ENCODE measurements at regions of chr11 and their contacts with region 1.

Region 1: GRCh38 chr11:62841361-62842184 is 2.2 kb upstream of the WDR74 start:
- DNase-seq: peak; percentile 87
- H3K4me3 Mint-ChIP-seq: no peak overlapping the region
- H3K27ac Mint-ChIP-seq: no peak overlapping the region
- H3K4me1 Mint-ChIP-seq: peaks cover 27% of the 10 kb centered on the region
- H3K27me3 Mint-ChIP-seq: no peaks in the 10 kb centered on the region

Region 2: DNA sequence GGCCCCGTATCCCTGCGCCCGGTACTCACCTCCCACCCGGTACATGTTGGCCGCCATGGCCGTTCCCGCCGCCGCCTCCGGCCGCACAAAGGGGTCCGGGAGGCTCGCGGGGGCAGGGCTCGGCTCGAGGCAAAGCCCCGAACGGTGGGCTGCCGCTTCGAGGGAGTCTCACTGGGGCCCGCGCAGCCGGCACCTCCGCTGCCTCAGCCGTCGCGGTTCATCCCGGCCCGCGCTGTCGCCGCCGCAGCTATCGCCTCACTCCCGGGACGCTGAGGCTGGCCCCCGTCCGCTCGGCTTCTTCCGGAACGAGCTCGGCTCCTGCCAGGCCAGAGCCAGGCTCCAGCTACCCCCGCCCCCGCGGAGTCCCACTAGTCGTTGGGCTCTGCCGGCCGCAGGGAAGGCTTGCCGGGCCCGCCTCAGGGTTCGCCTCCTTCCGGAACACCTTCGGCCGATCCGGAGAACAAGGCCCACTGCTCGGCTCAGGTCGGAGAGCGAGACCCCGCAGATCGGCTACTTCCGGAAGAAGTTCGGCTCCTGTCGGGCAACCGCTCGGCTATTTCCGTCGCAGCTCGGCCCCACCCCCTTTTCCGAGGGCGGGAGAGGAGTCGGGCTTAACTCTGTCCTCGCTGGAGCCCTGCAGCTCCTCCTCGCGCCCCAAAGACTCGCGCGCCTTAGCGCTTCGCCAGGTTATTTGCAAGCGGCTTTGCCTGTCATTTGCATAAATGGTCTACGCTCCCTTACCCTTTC is 240.0 kb before region 1 on chr11 and contains the start of gene MTA2:
- CTCF ChIA-PET with region 1: no interaction called
- POLR2A ChIA-PET with region 1: interaction called, 38 read pairs
- DNase-seq: peak; percentile 100
- H3K4me3 Mint-ChIP-seq: peak within 1 kb of the TSS; percentile 85
- H3K27ac Mint-ChIP-seq: peak within 1 kb of the TSS; percentile 88
- H3K4me1 Mint-ChIP-seq: peaks cover 53% of the 10 kb centered on the region
- H3K27me3 Mint-ChIP-seq: no peaks in the 10 kb centered on the region
- total RNA-seq, gene MTA2: 226 TPM

Region 3: GRCh38 chr11:62671575-62672389 is 169.8 kb before region 1 on chr11 and contains the starts of genes LBHD1 and UQCC3:
- CTCF ChIA-PET with region 1: no interaction called
- POLR2A ChIA-PET with region 1: interaction called, 48 read pairs
- DNase-seq: peak; percentile 91
- H3K4me3 Mint-ChIP-seq: peak within 1 kb of the TSS; percentile 91
- H3K27ac Mint-ChIP-seq: peak within 1 kb of the TSS; percentile 91
- H3K4me1 Mint-ChIP-seq: peaks cover 68% of the 10 kb centered on the region
- H3K27me3 Mint-ChIP-seq: no peaks in the 10 kb centered on the region
- total RNA-seq, gene LBHD1: 17.2 to 18.3 TPM
- total RNA-seq, gene UQCC3: 7.9 to 8.2 TPM

Region 4: DNA sequence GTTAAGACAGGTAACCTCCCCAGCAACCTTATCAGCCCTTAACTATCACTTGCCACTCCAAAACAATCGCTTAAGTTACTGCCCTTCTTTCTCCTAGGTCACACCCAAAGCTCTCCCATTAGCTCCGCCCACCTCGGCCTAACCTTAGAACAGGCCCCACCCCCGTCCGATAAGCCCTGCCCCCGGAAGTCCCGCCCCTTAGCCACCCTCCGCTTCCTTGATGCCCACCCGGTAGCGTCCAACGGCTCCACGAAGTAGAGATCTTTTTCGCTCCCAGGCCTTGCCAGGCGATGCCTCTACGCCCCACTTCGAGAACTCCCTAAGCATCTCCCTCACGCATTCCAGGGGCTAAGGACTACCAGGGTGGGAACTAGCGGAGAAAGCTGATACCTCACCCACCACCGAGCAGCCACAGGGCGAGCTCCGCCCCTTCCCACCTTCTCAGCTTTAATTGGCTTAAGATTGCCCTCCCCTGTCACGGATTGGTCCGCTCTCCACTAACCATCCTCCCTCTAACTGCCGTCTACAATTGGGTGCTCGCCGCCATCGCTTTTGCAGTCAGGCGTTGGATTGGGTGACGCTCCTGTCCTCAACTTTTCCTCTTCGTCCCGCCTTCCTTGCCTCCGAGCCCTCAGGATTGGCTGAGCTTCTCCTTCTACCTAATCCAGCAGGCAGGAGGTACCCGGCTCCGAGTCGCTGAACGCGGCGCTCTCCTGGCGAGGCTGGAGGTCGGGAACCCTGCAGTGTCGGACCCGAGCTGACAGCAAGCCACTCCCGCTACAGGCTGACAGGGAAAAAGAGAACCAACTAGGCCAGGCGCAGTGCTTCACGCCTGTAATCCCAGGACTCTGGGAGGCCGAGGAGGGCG is 87.6 kb before region 1 on chr11 and contains the start of gene ZBTB3:
- CTCF ChIA-PET with region 1: no interaction called
- POLR2A ChIA-PET with region 1: interaction called, 90 read pairs
- DNase-seq: peak; percentile 97
- H3K4me3 Mint-ChIP-seq: peak within 1 kb of the TSS; percentile 95
- H3K27ac Mint-ChIP-seq: peak within 1 kb of the TSS; percentile 93
- H3K4me1 Mint-ChIP-seq: peaks cover 33% of the 10 kb centered on the region
- H3K27me3 Mint-ChIP-seq: no peaks in the 10 kb centered on the region
- total RNA-seq, gene ZBTB3: 13.3 to 13.4 TPM

Region 5: DNA sequence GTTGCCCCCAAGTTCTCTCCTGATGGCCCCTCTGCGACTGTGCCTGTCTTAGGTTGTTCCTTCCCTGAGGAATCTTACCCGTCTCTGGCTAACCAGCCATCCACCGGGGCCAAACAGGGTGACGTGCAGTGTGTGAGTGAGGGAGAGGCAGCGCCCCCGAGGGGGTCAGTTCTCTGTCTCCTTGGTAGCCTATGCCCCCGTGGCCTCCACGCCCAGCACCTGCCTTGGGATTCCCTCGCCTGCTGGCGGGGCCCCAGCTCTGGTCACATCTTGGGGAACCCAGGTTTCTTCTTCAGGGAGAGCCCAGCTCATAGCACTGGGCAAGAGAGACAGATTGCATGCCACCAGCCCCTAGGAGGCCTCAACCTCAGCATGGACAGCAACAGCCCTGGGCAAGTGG is 42.1 kb before region 1 on chr11:
- CTCF ChIA-PET with region 1: no interaction called
- POLR2A ChIA-PET with region 1: interaction called, 224 read pairs
- DNase-seq: no peak
- H3K4me3 Mint-ChIP-seq: no peak overlapping the region
- H3K27ac Mint-ChIP-seq: no peak overlapping the region
- H3K4me1 Mint-ChIP-seq: peaks cover 30% of the 10 kb centered on the region
- H3K27me3 Mint-ChIP-seq: no peaks in the 10 kb centered on the region

Region 6: DNA sequence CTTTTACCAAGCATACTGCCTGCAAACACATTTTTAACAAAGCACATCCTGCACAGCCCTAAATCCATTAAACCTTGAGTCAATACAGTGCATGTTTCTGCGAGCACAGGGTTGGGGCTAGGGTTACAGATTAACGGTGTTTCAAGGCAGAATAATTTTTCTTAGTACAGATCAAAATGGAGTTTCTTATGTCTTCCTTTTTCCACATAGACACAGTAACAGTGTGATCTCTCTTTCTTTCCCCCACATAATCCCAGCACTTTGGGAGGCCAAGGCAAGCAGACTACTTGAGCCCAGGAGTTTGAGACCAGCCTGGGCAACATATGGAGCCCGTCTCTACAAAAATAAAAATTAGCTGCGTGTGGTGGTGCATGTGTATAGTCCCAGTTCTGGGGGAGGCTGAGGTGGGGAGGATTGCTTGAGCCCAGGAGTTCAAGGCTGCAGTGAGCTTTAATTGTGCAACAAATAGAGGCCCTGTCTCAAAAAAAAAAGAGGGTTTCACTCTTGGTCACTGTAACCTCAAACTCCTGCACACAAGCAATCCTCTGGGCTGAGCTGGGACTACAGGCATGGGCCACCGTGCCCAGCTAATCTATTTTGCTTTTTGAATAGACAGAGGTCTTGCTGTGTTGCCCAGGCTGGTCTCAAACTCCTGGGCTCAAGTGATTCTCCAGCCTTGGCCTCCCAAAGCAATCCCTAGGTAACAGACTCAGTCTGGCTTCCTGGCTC is 19.4 kb after region 1 on chr11:
- CTCF ChIA-PET with region 1: interaction called, 20 read pairs
- POLR2A ChIA-PET with region 1: interaction called, 674 read pairs
- DNase-seq: no peak
- H3K4me3 Mint-ChIP-seq: no peak overlapping the region
- H3K27ac Mint-ChIP-seq: peak overlapping the region; percentile 63
- H3K4me1 Mint-ChIP-seq: peaks cover 67% of the 10 kb centered on the region
- H3K27me3 Mint-ChIP-seq: no peaks in the 10 kb centered on the region

Region 7: GRCh38 chr11:62922658-62923431 is 81.3 kb after region 1 on chr11:
- CTCF ChIA-PET with region 1: no interaction called
- POLR2A ChIA-PET with region 1: no interaction called
- DNase-seq: no peak
- H3K4me3 Mint-ChIP-seq: no peak overlapping the region
- H3K27ac Mint-ChIP-seq: no peak overlapping the region
- H3K4me1 Mint-ChIP-seq: peaks cover 18% of the 10 kb centered on the region
- H3K27me3 Mint-ChIP-seq: peaks cover 68% of the 10 kb centered on the region